H1 (cell line): ENCODE measurements at regions of chr11 and their contacts with region 1.

Region 1: DNA sequence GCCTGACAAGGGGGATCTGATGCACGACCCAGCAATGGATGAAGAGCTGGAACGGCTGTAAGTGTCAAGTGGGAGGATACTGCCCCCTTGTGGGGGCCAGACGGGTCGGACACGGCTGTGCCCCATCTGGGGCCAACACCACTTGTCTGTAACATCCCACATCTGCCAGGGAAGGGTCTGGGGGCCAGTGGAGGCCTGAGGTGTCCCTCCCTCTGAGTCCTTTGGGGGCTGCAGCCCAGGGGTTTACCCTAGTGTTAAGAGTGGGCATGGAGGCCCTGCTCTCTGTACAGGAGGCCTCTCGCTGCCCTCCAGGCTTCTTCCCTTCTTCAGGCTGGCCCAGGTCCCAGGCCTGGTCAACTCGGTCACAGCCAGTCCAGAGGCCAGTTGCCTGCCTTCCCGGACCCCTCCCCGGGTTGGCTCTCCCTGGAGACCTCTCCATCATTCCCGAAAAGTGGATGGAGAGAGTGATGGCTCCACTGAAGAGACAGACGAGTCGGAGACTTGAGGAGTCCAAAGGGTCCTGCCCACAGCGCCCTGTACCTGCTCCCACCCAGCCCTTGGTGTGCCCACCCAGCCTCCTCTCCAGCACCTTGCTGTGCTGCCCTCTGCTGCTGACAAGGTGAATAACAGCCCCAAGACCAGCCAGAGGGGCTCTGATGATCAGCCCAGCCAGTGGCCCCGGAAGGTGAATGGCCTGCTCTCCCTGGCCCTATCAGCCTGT is 15.4 kb downstream of the ARFGAP2 start:
- DNase-seq: peak in 1 of 2 experiments; percentile 90
- H3K4me3 ChIP-seq: no peak overlapping the region
- H3K27ac ChIP-seq: no peak overlapping the region
- H3K4me1 ChIP-seq: no peaks in the 10 kb centered on the region
- H3K27me3 ChIP-seq: no peaks in the 10 kb centered on the region
- CTCF ChIP-seq: peak; percentile 91 to 96 (median 91)
- EP300 ChIP-seq: no peak
- POLR2A ChIP-seq: no peak; a peak in 1 of 3 replicates
- RAD21 ChIP-seq: peak; percentile 88 to 93

Region 2: DNA sequence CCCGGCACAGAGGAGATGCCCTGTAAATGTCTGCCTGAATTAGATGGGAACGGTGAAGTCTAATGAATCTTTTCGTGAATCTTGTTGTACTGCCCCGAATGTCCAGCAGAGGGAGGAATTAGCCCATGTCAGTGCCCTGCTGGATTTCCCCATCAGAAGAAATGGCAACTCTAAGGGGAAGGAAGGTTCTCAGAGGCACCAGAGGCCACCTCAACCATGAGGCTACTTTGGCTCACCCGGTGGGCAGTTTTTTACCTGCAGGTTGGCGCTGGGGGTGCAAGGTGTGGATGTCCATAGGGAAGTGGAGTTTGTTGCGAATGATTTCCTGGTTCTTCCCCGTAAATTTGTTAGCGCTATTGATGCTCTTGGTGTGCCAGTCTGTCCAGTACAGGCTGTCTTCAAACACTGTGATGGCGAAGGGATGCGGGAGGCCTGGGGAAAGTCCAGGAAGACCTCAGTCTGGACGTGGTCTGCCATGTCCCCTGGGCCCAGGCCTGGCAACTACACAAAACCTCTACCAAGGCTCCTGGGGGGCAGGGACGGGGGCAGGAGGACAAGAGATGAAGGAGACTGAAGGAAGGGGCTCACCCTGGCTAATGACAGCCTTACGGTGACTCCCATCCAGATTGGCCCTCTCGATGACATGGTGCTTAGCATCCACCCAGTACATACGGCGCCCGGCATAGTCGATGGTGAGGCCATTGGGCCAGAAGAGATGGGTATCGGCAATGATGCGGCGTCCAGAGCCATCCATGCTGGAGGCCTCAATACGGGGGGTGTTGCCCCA is 271.4 kb before region 1 on chr11:
- CTCF ChIA-PET with region 1: interaction called, 16 read pairs
- POLR2A ChIA-PET with region 1: no interaction called
- DNase-seq: peak; percentile 51 to 91
- H3K4me3 ChIP-seq: no peak overlapping the region
- H3K27ac ChIP-seq: 0 out of 2 replicates have a peak overlapping the region, but pooled peaks have one; percentile 6
- H3K4me1 ChIP-seq: no peaks in the 10 kb centered on the region
- H3K27me3 ChIP-seq: no peaks in the 10 kb centered on the region
- CTCF ChIP-seq: peak; percentile 63 to 96 (median 92)
- EP300 ChIP-seq: no peak
- POLR2A ChIP-seq: no peak
- RAD21 ChIP-seq: peak; percentile 98

Region 3: DNA sequence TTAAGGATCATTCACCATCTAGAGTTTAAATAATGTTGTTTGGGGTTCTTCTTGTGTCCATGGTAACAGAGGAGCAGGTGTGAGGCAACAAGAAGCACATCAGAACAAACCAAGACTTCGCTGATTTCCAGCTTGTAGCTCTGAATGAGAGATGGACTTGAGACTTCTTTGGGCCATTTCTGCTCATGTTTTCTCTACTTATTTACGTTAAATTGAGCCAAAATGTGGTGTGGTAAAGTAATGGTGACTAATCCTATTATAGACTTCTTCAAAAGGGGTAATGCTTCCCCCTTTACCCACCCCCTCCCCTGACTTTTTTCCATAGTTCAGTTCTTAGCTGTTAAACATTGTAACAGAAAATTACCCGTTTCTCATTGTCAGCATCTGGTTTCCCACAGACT is 159.5 kb before region 1 on chr11:
- CTCF ChIA-PET with region 1: no interaction called
- POLR2A ChIA-PET with region 1: no interaction called
- DNase-seq: no peak
- H3K4me3 ChIP-seq: no peak overlapping the region
- H3K27ac ChIP-seq: no peak overlapping the region
- H3K4me1 ChIP-seq: no peaks in the 10 kb centered on the region; a peak in 2 of 7 replicates
- H3K27me3 ChIP-seq: no peaks in the 10 kb centered on the region
- CTCF ChIP-seq: no peak
- EP300 ChIP-seq: no peak
- POLR2A ChIP-seq: no peak
- RAD21 ChIP-seq: no peak

Region 4: GRCh38 chr11:47093541-47093940 is 67.8 kb before region 1 on chr11:
- CTCF ChIA-PET with region 1: no interaction called
- POLR2A ChIA-PET with region 1: no interaction called
- DNase-seq: no peak
- H3K4me3 ChIP-seq: no peak overlapping the region
- H3K27ac ChIP-seq: no peak overlapping the region
- H3K4me1 ChIP-seq: no peaks in the 10 kb centered on the region
- H3K27me3 ChIP-seq: no peaks in the 10 kb centered on the region
- CTCF ChIP-seq: no peak
- EP300 ChIP-seq: no peak
- POLR2A ChIP-seq: no peak
- RAD21 ChIP-seq: no peak

Region 5: GRCh38 chr11:47104261-47104950 is 56.9 kb before region 1 on chr11:
- CTCF ChIA-PET with region 1: no interaction called
- POLR2A ChIA-PET with region 1: no interaction called
- DNase-seq: peak in 1 of 2 experiments; percentile 9
- H3K4me3 ChIP-seq: no peak overlapping the region
- H3K27ac ChIP-seq: peak overlapping the region; percentile 36
- H3K4me1 ChIP-seq: peaks cover 6 to 16% (median 7%) of the 10 kb centered on the region in 4 experiments; a peak in 6 of 7 replicates
- H3K27me3 ChIP-seq: no peaks in the 10 kb centered on the region
- CTCF ChIP-seq: no peak
- EP300 ChIP-seq: no peak
- POLR2A ChIP-seq: no peak
- RAD21 ChIP-seq: no peak